PC-9 (cell line): ENCODE measurements at regions of chr7 and their contacts with region 1.

Region 1: GRCh38 chr7:101138213-101138870 is 11.4 kb downstream of the SERPINE1 start:
- DNase-seq: peak; percentile 89 to 93
- H3K4me3 ChIP-seq: peak overlapping the region; percentile 11; the same call in 1 of the 2 replicates
- H3K27ac ChIP-seq: peak overlapping the region; percentile 91
- H3K4me1 ChIP-seq: peaks cover 53% of the 10 kb centered on the region
- H3K27me3 ChIP-seq: no peaks in the 10 kb centered on the region
- CTCF ChIP-seq: peak; percentile 98

Region 2: DNA sequence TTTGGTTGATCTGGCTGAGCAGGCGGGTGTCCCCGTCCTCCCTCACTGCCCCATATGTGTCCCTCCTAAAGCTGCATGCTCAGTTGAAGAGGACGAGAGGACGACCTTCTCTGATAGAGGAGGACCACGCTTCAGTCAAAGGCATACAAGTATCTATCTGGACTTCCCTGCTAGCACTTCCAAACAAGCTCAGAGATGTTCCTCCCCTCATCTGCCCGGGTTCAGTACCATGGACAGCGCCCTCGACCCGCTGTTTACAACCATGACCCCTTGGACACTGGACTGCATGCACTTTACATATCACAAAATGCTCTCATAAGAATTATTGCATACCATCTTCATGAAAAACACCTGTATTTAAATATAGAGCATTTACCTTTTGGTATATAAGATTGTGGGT is 80.0 kb before region 1 on chr7:
- CTCF ChIA-PET with region 1: interaction called, 8 read pairs
- POLR2A ChIA-PET with region 1: no interaction called
- intact Hi-C with region 1: loop called (anchors 1 kb)
- DNase-seq: peak in 1 of 2 experiments; percentile 58
- H3K4me3 ChIP-seq: no peak overlapping the region
- H3K27ac ChIP-seq: no peak overlapping the region
- H3K4me1 ChIP-seq: no peaks in the 10 kb centered on the region
- H3K27me3 ChIP-seq: peaks cover 61% of the 10 kb centered on the region
- CTCF ChIP-seq: no peak

Region 3: GRCh38 chr7:101094416-101095375 is 43.6 kb before region 1 on chr7:
- CTCF ChIA-PET with region 1: interaction called, 12 read pairs
- POLR2A ChIA-PET with region 1: no interaction called
- intact Hi-C with region 1: no loop called
- DNase-seq: peak in 1 of 2 experiments; percentile 58
- H3K4me3 ChIP-seq: no peak overlapping the region
- H3K27ac ChIP-seq: no peak overlapping the region
- H3K4me1 ChIP-seq: peaks cover 8% of the 10 kb centered on the region
- H3K27me3 ChIP-seq: no peaks in the 10 kb centered on the region
- CTCF ChIP-seq: peak; percentile 74

Region 4: DNA sequence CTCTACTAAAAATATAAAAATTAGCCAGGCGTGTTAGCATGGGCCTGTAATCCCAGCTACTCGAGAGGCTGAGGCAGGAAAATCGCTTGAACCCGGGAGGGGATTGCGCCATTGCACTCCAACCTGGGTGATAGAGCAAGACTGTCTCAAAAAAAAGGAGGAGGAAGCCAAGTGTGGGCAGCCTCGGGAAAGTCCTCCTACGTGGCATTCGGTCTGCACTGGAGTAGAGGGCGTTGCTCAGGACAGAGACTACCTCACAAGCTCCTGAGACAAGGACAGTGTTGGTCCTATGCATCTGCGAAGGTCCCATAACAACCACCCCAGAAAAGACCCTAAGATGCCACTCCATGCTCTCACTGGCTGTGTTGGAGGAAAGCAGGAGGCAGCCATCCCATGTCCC is 21.4 kb before region 1 on chr7:
- CTCF ChIA-PET with region 1: no interaction called
- POLR2A ChIA-PET with region 1: interaction called, 17 read pairs
- intact Hi-C with region 1: loop called (anchors 1 kb)
- DNase-seq: no peak
- H3K4me3 ChIP-seq: no peak overlapping the region
- H3K27ac ChIP-seq: peak overlapping the region; percentile 99
- H3K4me1 ChIP-seq: peaks cover 58% of the 10 kb centered on the region
- H3K27me3 ChIP-seq: no peaks in the 10 kb centered on the region
- CTCF ChIP-seq: no peak